ENCODE measurements at regions of chr18 and their contacts with region 1.

Region 1: DNA sequence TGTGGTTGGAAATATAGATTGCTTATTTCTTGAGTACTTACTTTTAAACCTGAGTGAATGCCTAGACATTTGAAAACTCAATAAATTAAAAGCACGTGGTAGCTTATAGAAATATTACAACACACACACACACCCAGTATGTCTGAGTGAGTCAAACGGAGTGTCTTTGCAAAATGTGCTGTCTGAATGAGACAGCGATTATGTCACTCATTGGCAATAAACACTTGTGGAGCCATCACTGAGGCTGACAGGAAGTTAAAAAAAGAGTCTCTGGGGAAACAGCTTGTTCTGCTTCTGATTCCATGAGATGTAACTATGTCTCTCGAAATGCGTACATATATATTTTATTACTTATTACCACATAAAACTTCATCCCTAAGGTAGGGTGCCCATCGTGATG is 22.3 kb upstream of the VPS4B start:
- DNase-seq: peak; percentile 85
- H3K4me3 ChIP-seq: no peak overlapping the region
- H3K27ac ChIP-seq: peak overlapping the region; percentile 4
- H3K4me1 ChIP-seq: peaks cover 20% of the 10 kb centered on the region
- H3K27me3 ChIP-seq: no peaks in the 10 kb centered on the region
- CTCF ChIP-seq: no peak

Region 2: DNA sequence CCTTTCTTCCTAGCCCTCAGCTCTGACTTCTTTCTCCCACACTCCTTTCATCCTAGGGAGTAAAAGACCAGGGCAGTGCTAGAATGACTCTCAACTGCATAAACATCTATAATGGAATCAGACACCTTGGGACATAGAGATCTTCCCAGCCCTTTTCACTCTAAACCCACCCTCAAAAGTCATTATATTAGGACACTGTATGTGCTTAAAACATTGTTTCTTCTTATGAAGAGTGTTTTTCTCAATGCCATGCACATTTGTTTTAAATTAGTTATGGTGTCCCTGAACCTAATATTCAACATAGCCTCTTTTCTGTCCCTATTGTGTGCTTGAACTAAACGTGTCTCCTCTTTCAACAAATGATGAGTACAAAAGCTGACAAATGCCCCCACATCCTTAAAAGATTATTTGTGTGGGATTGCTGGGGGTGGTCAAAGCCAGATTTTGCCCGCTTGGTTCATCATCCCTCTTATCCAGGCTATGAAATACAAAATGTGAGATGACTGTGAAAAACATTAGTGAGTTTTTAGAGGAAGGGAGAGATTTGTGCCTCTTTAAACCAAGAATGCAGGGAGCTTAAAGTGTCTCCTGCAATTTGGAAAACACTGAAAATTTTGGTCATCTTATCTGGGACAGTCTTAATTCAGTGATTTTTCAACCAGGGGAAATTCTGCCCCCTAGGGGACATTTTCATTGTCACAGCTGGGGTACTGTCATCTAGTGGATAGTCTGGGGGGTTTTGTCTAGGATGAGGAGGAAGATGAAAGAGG is 61.2 kb after region 1 on chr18:
- CTCF ChIA-PET with region 1: no interaction called
- POLR2A ChIA-PET with region 1: no interaction called
- intact Hi-C with region 1: loop called (anchors 10 kb)
- DNase-seq: peak; percentile 79
- H3K4me3 ChIP-seq: no peak overlapping the region
- H3K27ac ChIP-seq: peak overlapping the region; percentile 31
- H3K4me1 ChIP-seq: peaks cover 18% of the 10 kb centered on the region
- H3K27me3 ChIP-seq: no peaks in the 10 kb centered on the region
- CTCF ChIP-seq: peak; percentile 83

Region 3: DNA sequence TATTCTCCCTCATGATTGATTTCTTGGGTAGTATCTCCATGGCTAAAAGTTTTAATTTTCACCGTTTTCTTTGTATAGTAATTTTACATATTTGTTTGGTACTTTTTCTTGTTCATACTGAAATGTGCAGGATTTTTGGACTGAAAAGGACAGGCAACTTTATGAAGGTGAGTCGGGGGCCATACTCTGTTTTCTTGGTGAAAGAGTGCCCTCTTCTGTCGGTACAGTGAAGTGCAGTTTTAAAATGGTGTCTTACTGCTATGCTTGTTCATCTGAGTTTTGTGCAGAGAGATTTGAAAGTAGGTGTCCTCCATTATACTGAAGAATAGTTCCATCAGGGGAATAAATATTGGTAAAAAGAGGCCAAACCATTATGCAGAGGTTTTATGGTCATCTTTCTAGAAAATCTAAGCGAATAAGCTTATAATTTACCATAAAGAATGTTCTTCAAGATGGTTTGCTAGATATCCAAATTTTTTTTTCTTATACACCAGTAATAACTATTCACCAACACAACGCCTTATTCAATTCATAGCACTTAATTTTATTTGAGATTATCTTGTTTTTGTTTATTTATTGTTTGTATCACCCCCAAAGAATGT is 133.9 kb after region 1 on chr18:
- CTCF ChIA-PET with region 1: no interaction called
- POLR2A ChIA-PET with region 1: no interaction called
- intact Hi-C with region 1: loop called (anchors 5 kb)
- DNase-seq: peak; percentile 79
- H3K4me3 ChIP-seq: no peak overlapping the region
- H3K27ac ChIP-seq: no peak overlapping the region
- H3K4me1 ChIP-seq: peaks cover 25% of the 10 kb centered on the region
- H3K27me3 ChIP-seq: no peaks in the 10 kb centered on the region
- CTCF ChIP-seq: peak; percentile 89

Region 4: GRCh38 chr18:63808125-63808524 is 363.6 kb after region 1 on chr18:
- CTCF ChIA-PET with region 1: no interaction called
- POLR2A ChIA-PET with region 1: no interaction called
- intact Hi-C with region 1: no loop called
- DNase-seq: no peak
- H3K4me3 ChIP-seq: no peak overlapping the region
- H3K27ac ChIP-seq: no peak overlapping the region
- H3K4me1 ChIP-seq: no peaks in the 10 kb centered on the region
- H3K27me3 ChIP-seq: no peaks in the 10 kb centered on the region
- CTCF ChIP-seq: no peak